ENCODE measurements at regions of chrX and their contacts with region 1.

Region 1: DNA sequence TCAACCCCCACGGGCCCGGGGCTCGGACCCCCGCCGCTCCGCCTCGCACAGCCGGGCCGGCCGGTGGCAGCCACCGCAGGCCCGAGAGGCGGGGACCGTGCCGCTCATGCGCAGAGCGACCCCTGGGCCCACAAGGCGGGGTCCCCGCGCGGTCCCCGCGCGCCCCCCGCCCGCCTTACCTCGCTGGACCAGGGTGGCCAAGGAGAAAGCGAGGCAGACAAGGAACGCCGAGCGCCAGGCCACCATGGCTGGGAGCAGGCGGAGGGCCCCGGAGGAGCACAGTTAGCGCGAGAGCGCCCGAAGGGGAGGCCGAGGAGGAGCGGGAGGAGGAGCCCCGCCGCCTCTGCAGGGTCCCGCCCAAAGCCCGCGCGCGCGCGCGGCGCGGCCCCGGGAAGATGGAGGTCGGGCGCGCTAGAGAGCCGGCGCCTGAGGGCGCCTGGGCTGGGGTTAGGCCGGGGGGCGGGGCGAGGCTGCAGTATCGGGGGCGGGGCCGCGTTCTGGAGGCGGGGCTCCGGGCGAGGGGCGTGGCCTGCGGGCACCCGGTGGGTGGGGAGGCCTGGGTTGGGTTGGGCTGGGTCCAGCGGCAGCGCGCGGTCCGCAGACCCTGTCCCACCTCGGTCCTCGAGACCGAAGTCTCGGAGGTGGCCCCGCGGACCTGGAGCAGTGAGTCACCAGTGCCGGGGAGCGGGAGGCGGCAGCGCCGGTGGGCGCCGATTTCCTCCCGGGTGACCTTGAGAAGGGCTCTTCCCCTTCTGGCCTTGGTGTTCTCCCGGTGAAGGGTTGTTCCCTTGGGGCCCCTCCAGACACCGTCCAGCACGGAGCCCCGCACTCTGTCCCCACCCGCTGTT is at the start of gene CD99L2:
- DNase-seq: peak; percentile 91 to 94
- ATAC-seq: peak; percentile 91 to 97 (median 94)
- H3K4me3 ChIP-seq: peak within 1 kb of the TSS; percentile 77
- H3K27ac ChIP-seq: peak within 1 kb of the TSS; percentile 88
- H3K4me1 ChIP-seq: no peaks in the 10 kb centered on the region
- H3K27me3 ChIP-seq: no peaks in the 10 kb centered on the region
- CTCF ChIP-seq: no peak
- total RNA-seq, gene CD99L2: 106 to 173 (median 136) TPM

Region 2: DNA sequence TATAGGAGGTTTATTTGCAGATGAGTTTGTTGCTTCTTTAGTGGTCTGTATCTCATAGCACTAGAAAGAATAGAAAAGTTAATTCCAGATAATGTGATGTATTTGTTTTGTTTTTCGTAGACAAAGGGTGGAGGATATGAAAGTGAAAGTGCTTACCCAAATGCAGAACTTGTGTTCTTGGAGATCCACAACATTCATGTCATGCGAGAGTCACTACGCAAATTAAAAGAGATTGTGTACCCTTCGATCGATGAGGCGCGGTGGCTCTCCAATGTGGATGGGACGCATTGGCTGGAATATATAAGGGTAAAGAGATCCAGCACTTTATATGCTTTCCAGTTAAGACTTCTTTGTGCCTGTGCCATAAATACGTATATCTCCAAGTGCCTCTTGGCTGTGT is 162.1 kb before region 1 on chrX:
- intact Hi-C with region 1: no loop called
- DNase-seq: no peak
- ATAC-seq: no peak
- H3K4me3 ChIP-seq: no peak overlapping the region
- H3K27ac ChIP-seq: no peak overlapping the region
- H3K4me1 ChIP-seq: no peaks in the 10 kb centered on the region
- H3K27me3 ChIP-seq: no peaks in the 10 kb centered on the region
- CTCF ChIP-seq: no peak

Region 3: DNA sequence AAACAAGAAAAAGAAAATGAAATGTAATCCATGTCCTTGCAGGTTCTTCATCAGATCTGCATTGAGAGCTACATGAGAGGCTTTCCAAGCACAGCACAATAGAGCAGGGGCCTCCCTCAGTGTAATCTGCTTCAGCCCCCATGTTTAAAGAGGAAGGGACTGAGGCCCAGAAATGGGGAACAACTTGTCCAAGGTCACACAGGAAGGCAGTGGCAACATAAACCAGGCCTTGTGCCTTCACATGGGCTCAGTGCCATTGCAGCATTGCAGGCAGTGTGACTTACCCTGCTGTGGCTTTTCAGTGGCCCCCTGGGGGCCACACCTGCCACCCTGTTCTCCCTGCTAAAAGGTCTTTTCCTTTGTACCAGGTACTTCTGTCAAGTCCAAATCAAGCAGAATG is 20.8 kb after region 1 on chrX:
- intact Hi-C with region 1: no loop called
- DNase-seq: no peak
- ATAC-seq: no peak
- H3K4me3 ChIP-seq: no peak overlapping the region
- H3K27ac ChIP-seq: no peak overlapping the region
- H3K4me1 ChIP-seq: no peaks in the 10 kb centered on the region
- H3K27me3 ChIP-seq: no peaks in the 10 kb centered on the region
- CTCF ChIP-seq: no peak

Region 4: GRCh38 chrX:150982788-150983520 is 84.4 kb after region 1 on chrX and contains the start of gene HMGB3:
- intact Hi-C with region 1: loop called (anchors 2 to 10 kb)
- DNase-seq: peak; percentile 84 to 90
- ATAC-seq: peak; percentile 98 to 100 (median 99)
- H3K4me3 ChIP-seq: peak within 1 kb of the TSS; percentile 69
- H3K27ac ChIP-seq: peak within 1 kb of the TSS; percentile 61
- H3K4me1 ChIP-seq: no peaks in the 10 kb centered on the region
- H3K27me3 ChIP-seq: peaks cover 0 to 7% (median 0%) of the 10 kb centered on the region in 3 donors
- CTCF ChIP-seq: no peak
- total RNA-seq, gene HMGB3: 14.1 to 89.2 (median 27.1) TPM

Region 5: GRCh38 chrX:151206871-151207270 is 308.3 kb after region 1 on chrX:
- intact Hi-C with region 1: no loop called
- DNase-seq: no peak
- ATAC-seq: no peak
- H3K4me3 ChIP-seq: no peak overlapping the region
- H3K27ac ChIP-seq: no peak overlapping the region
- H3K4me1 ChIP-seq: no peaks in the 10 kb centered on the region
- H3K27me3 ChIP-seq: no peaks in the 10 kb centered on the region
- CTCF ChIP-seq: no peak